Posterior cingulate gyrus (tissue), 11 donors: ENCODE measurements at regions of chr19 and their contacts with region 1.

Region 1: DNA sequence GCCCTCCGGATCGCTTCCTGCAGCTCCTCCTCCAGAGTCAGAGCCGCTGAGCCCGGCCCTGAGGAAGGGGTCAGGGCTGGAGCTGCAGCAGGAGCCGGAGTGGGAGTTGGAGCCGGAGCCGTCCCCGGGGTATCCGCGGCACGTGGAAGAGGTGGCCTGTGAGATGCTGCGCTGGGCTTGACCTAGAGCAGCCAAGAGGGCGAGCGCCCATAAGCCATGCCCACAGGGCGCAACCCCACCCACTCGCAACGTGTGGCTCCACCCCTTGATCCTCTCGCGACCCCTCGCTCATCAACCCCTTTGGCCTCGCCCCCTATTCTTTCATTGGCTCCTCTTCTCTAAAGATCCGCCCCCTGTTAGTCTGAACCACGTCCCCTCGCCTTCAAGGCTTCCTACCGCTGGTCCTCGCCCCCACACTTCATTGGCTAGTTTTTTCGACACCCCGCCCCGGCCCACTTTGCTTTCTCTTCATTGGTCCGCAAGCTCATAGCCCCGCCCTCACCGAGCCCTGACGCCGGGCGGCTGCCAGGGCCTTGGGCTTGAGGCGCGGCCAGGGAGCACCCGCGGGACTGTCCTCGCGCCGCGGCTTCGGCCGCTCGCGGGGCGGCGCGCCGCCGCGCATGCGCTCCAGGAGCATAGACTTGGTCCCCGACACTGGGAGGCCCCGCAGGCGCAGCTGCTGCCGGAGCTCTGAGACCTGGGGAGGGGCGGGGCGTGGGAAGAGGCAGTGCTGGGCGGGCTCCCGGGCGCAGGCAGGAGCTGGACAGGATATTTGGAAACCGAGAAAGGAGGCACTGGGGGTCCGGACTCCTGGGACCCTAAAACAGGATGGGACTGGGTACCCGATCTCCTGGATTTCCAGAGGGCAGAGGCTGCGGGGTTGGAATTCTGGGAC is 5.4 kb downstream of the MAMSTR start:
- DNase-seq: peak; percentile 97 to 100 (median 99)

Region 2: DNA sequence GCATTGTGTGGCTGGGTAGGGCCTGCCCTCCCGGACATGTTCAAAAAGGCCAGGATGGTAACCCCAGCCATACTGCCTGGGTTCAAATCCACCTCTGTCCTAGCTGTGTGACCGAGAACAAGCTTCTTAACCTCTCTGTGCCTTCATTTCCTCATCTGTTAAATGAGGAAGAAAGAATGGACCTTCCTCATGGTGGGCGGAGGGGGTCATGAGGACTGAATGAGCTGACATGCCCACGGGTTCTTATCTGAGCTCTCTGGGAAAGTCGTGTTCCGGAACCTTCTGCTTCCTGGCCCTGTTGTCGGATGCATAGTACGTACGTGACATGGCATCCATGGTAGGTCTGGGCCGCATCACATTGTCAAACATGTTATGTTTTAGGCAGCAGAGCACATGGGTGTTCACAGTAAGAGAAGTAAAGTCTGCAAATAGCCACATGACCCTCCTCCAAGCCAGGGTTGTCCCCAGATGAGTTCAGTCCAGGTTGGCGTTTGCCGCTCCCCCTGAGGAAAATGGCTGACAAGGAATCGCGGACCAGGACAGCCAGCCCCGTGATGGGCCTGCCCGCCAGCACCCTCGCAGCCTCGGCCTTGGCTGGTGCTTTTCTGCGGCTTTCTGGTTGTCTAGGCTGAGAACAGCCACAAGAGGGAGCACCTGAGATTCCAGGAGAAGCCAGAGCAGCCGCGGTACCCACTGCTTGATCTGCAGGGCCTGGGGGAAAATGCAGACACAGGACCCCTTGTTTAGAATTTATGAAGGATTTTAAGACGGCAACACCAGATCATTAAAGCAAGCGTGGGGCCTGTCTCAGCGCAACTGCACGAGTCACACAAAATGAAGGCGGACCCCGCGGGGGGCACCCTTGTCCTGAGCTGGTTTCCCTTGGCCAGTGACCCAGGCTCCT is 38.9 kb before region 1 on chr19:
- intact Hi-C with region 1: loop called (anchors 5 kb)
- DNase-seq: peak; percentile 75 to 97 (median 88)